ENCODE measurements at regions of chr5 and their contacts with region 1.

Region 1: GRCh38 chr5:137320056-137321045 is 178.8 kb downstream of the SPOCK1 start:
- DNase-seq: peak; percentile 66
- H3K4me3 ChIP-seq: no peak overlapping the region
- H3K27ac ChIP-seq: no peak overlapping the region
- H3K4me1 ChIP-seq: peaks cover 6% of the 10 kb centered on the region
- H3K27me3 ChIP-seq: no peaks in the 10 kb centered on the region
- CTCF ChIP-seq: peak; percentile 84 to 85

Region 2: GRCh38 chr5:136802383-136802782 is 518.0 kb before region 1 on chr5:
- CTCF ChIA-PET with region 1: interaction called, 4 read pairs
- dilution Hi-C with region 1: loop called (anchors 25 kb)
- in situ Hi-C with region 1: no loop called
- intact Hi-C with region 1: loop called (anchors 1 kb)
- DNase-seq: peak; percentile 14
- H3K4me3 ChIP-seq: no peak overlapping the region
- H3K27ac ChIP-seq: no peak overlapping the region
- H3K4me1 ChIP-seq: peaks cover 7% of the 10 kb centered on the region
- H3K27me3 ChIP-seq: no peaks in the 10 kb centered on the region
- CTCF ChIP-seq: peak; percentile 10 to 54

Region 3: GRCh38 chr5:137126829-137127228 is 193.5 kb before region 1 on chr5:
- CTCF ChIA-PET with region 1: interaction called, 12 read pairs
- dilution Hi-C with region 1: no loop called
- in situ Hi-C with region 1: no loop called
- intact Hi-C with region 1: no loop called
- DNase-seq: peak; percentile 9
- H3K4me3 ChIP-seq: no peak overlapping the region
- H3K27ac ChIP-seq: no peak overlapping the region
- H3K4me1 ChIP-seq: no peaks in the 10 kb centered on the region
- H3K27me3 ChIP-seq: no peaks in the 10 kb centered on the region
- CTCF ChIP-seq: no peak

Region 4: GRCh38 chr5:137344723-137345322 is 24.5 kb after region 1 on chr5:
- CTCF ChIA-PET with region 1: interaction called, 11 read pairs
- dilution Hi-C with region 1: no loop called
- in situ Hi-C with region 1: no loop called
- intact Hi-C with region 1: loop called (anchors 1 kb)
- DNase-seq: peak; percentile 39
- H3K4me3 ChIP-seq: no peak overlapping the region
- H3K27ac ChIP-seq: no peak overlapping the region
- H3K4me1 ChIP-seq: peaks cover 14% of the 10 kb centered on the region
- H3K27me3 ChIP-seq: no peaks in the 10 kb centered on the region
- CTCF ChIP-seq: peak; percentile 98 to 100

Region 5: GRCh38 chr5:137619191-137619870 is 299.0 kb after region 1 on chr5:
- CTCF ChIA-PET with region 1: no interaction called
- dilution Hi-C with region 1: no loop called
- in situ Hi-C with region 1: loop called in 1 of 2 experiments (anchors 25 kb)
- intact Hi-C with region 1: loop called (anchors 5 kb)
- DNase-seq: peak; percentile 49
- H3K4me3 ChIP-seq: no peak overlapping the region
- H3K27ac ChIP-seq: no peak overlapping the region
- H3K4me1 ChIP-seq: peaks cover 29% of the 10 kb centered on the region
- H3K27me3 ChIP-seq: no peaks in the 10 kb centered on the region
- CTCF ChIP-seq: no peak

Region 6: DNA sequence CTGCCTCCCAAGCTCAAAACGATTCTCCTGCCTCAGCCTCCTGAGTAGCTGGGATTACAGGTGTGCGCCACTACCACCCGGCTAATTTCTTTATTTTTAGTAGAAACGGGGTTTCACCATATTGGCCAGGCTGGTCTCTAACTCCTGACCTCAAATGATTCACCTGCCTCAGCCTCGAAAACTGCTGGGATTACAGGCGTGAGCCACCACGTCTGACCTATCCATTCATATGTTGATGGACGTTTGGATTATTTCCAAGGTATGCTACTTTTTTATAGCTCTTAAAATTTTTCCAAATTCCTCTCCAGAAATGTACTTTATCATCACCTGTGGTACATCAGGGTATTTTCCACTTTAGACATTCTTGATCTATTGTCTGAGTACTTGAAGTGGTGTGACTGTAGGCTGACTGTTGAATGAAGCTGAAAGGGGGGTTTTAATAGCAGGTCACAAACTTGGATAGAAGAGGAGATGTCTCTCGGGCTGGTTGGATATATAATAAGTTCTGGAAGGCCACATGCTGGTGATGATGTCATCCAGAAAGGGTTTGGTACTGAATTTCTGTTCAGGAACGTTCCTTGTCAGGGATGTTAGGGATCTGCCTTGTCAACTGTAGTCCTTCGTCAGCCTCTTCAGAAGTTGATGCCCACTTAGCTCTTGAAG is 1440.2 kb after region 1 on chr5:
- CTCF ChIA-PET with region 1: no interaction called
- dilution Hi-C with region 1: no loop called
- in situ Hi-C with region 1: no loop called
- intact Hi-C with region 1: no loop called
- DNase-seq: no peak
- H3K4me3 ChIP-seq: no peak overlapping the region
- H3K27ac ChIP-seq: no peak overlapping the region
- H3K4me1 ChIP-seq: peaks cover 5% of the 10 kb centered on the region
- H3K27me3 ChIP-seq: no peaks in the 10 kb centered on the region
- CTCF ChIP-seq: no peak